MCF 10A (cell line): ENCODE measurements at regions of chr1 and their contacts with region 1.

Region 1: DNA sequence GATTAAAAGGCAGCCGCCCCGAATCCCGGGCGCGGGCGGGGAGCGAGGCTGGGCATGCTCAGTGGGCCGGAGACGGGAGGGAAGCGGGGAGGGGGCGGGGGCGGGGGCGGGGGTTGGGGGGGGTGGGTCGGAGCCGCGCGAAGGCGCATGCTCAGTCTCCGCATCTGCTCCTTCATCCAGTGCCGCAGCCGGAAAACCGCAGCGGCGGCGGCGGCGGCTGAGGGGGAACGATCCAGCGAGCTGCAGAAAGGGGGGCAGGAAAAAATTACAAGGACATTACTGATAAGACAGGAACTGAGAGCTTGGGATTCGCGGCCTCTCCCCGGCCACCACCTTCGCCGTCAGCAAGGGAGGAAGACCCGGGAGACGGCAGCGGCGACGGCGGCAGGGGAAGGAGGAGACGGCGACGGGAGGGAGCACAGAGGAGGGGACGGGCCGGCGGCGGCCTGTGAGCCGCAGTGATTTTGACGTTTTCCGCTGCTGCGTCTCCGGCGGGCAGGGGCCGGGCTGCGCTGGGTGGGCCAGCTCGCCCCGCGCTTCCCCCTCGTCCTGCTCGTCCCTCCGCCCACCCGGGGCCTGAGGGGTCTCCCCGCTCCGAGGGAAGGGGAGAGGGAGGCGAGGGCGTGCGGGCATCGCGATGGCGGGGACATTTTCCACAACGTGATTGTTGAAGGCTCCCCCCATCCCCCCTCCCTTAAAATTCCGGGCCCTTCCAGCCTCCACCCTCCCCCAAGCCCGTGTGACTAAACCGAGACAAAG is at the start of gene CAMSAP2:
- DNase-seq: peak; percentile 95
- H3K4me3 Mint-ChIP-seq: peak within 1 kb of the TSS; percentile 84
- H3K27ac Mint-ChIP-seq: peak within 1 kb of the TSS; percentile 95
- H3K4me1 Mint-ChIP-seq: peaks cover 26% of the 10 kb centered on the region
- H3K27me3 Mint-ChIP-seq: no peaks in the 10 kb centered on the region
- CTCF ChIP-seq: no peak
- total RNA-seq, gene CAMSAP2: 144 and 209 TPM in 2 replicates

Region 2: DNA sequence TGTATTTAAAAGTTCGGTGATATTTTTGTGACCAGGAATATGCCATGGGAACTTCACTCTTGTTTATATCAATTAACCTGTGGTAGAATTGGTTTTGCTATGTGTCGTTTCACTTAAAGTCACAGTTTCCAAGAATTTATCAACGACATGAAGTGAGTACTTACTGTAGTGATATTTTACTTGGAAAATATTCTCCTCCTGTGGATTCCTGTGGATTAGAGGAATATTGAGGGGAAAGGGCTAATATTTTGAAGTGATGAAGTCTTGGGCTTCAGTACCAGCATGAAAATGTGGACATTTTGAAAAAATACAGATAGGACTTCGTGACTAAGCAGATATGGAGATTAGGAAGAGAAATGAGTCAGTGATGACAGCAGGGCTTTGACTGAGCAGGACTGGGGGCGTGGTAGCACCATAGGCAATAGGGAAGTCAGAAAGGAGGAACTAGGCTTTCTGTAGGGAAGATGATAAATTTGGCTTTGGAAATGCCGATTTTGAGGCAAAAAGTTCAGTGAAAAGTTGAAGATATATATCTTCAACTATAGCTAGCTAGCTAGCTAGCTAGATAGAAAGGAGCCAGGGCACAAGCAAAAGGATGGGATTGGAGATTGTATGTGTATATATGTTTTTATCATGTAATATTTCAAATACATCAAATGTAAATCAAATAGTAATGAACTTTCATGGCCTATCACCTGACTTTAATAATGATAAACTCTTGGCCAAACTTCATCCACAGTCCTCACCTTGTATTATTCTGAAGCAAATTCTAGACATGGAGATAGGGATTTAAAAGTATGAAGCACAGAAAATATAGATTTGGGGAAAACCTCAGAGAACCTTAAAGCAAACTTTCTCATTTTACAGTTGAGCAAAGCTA is 98.9 kb before region 1 on chr1:
- CTCF ChIA-PET with region 1: interaction called, 6 read pairs
- POLR2A ChIA-PET with region 1: interaction called, 28 read pairs
- intact Hi-C with region 1: no loop called
- DNase-seq: peak; percentile 95
- H3K4me3 Mint-ChIP-seq: peak overlapping the region; percentile 4
- H3K27ac Mint-ChIP-seq: peak overlapping the region; percentile 55
- H3K4me1 Mint-ChIP-seq: peaks cover 20% of the 10 kb centered on the region
- H3K27me3 Mint-ChIP-seq: no peaks in the 10 kb centered on the region
- CTCF ChIP-seq: no peak

Region 3: DNA sequence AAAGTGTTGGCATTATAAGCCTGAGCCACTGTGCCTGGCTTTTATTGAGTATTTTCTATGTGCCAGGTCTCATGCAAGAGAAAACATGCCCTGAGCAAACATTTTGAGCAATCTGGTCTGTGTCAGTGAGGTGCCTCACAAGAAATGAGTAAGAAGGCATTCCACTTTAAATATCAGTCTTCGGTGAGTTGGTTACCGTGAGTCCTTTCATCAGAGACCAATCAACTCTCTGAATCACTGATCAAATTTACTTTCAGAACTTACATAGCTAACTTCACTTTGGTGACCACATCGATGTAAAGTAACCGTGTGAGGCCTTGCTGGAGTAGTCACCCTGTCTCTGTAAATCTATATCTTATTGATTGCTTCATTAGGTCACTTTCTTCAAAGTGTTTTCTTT is 54.9 kb before region 1 on chr1:
- CTCF ChIA-PET with region 1: interaction called, 5 read pairs
- POLR2A ChIA-PET with region 1: interaction called, 145 read pairs
- intact Hi-C with region 1: no loop called
- DNase-seq: peak; percentile 75
- H3K4me3 Mint-ChIP-seq: no peak overlapping the region
- H3K27ac Mint-ChIP-seq: peak overlapping the region; percentile 46
- H3K4me1 Mint-ChIP-seq: peaks cover 5% of the 10 kb centered on the region
- H3K27me3 Mint-ChIP-seq: no peaks in the 10 kb centered on the region
- CTCF ChIP-seq: no peak

Region 4: GRCh38 chr1:200751717-200752116 is 12.8 kb after region 1 on chr1:
- CTCF ChIA-PET with region 1: interaction called, 10 read pairs
- POLR2A ChIA-PET with region 1: interaction called, 19 read pairs
- intact Hi-C with region 1: no loop called
- DNase-seq: no peak
- H3K4me3 Mint-ChIP-seq: no peak overlapping the region
- H3K27ac Mint-ChIP-seq: no peak overlapping the region
- H3K4me1 Mint-ChIP-seq: peaks cover 52% of the 10 kb centered on the region
- H3K27me3 Mint-ChIP-seq: no peaks in the 10 kb centered on the region
- CTCF ChIP-seq: no peak

Region 5: DNA sequence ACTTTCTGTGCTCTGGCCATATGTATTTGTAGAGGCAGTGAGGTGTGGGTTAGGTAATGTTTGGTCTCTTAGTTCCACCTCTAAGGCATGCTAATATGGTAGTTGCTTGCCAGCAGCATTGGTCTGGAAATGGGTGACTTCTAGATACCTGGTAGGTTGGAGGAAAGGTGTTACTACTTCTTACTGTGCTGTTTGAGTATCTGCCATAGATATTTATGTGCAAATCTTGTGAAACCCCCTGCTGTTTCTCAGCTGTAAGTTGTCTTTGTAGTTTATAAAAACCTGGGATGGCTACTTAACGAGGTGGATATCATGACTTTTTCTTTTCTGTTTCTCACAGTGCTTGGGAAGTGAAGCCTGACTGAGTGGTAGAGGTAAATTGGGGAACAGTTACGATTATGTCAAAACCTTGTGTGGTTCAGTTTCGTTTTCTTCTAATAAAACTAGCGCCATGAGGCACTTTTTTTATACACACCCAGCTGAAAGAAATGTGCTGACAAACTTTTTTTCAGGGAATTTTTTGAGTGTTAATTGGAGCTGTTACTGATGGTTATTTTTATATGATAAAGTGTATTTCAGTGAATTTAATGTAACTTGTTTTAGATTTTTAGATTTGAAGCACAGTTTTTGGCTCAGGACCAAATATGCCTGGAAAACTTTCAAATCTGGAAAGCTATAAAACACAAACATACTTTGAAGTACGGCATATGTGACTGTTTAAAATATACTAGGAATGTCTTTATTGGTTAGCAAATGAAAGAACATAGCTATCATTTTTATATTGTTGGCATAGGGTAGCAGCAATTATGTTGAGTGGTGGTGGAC is 41.8 kb after region 1 on chr1:
- CTCF ChIA-PET with region 1: no interaction called
- POLR2A ChIA-PET with region 1: interaction called, 31 read pairs
- intact Hi-C with region 1: no loop called
- DNase-seq: peak; percentile 38
- H3K4me3 Mint-ChIP-seq: peak overlapping the region; percentile 70
- H3K27ac Mint-ChIP-seq: peak overlapping the region; percentile 88
- H3K4me1 Mint-ChIP-seq: peaks cover 41% of the 10 kb centered on the region
- H3K27me3 Mint-ChIP-seq: no peaks in the 10 kb centered on the region
- CTCF ChIP-seq: no peak

Region 6: DNA sequence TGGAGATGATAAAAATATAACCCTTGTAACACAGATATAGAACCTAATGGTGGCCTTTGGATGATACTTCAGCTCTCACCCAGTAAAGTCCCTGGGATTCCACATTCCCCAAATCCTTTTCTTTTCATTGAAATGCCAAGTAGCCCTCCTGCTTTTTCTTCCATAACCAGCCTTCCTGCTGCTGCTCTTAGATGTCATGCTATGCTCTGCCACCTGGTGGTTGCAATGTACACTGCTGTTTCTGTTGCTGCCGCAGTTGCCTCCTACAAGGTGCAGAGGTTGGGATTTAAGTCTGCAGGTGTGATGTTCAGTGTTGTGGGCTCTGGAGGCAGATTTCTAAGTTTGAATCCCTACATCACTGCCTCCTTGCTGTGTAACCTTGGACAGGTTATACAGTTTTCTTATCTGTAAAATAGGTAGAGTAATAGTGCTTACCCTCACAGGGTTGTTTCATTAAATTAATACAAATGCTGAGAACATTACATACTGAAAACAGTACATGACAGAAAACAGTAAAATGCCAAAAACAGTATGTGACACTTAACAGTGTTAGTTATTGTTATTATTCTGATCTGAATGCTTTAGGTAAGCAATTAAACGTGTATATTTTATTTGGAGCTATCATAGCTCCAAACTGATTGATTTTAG is 64.1 kb after region 1 on chr1:
- CTCF ChIA-PET with region 1: interaction called, 9 read pairs
- POLR2A ChIA-PET with region 1: interaction called, 13 read pairs
- intact Hi-C with region 1: loop called (anchors 1 kb)
- DNase-seq: peak; percentile 93
- H3K4me3 Mint-ChIP-seq: no peak overlapping the region
- H3K27ac Mint-ChIP-seq: no peak overlapping the region
- H3K4me1 Mint-ChIP-seq: peaks cover 32% of the 10 kb centered on the region
- H3K27me3 Mint-ChIP-seq: no peaks in the 10 kb centered on the region
- CTCF ChIP-seq: peak; percentile 99